T-cell (primary cell): ENCODE measurements at regions of chr14 and their contacts with region 1.

Region 1: DNA sequence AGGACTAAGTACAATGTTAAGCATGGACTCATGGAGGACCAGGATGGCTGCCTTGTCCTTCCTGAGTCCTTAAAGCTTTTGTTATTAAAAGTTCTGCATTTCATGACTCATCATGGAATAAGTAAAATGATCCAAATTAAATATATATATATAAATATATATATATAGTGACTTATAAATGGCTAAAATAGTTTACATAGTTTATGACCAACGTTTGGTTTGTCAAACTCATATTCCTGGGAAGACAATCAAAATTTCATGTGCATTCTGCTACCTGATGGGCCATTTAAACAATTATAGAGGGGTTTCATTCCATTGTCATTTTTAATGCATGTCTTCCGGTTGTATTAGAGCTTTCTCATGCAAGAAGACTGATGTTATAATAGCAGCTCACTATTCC is 1190.7 kb downstream of the FSCB start:
- DNase-seq: no peak
- ATAC-seq: no peak
- H3K4me3 ChIP-seq: no peak overlapping the region
- H3K4me3 Mint-ChIP-seq: no peak overlapping the region
- H3K27ac ChIP-seq: no peak overlapping the region
- H3K27ac Mint-ChIP-seq: no peak overlapping the region
- H3K4me1 ChIP-seq: no peaks in the 10 kb centered on the region
- H3K4me1 Mint-ChIP-seq: no peaks in the 10 kb centered on the region
- H3K27me3 ChIP-seq: no peaks in the 10 kb centered on the region
- H3K27me3 Mint-ChIP-seq: no peaks in the 10 kb centered on the region

Region 2: GRCh38 chr14:43341921-43342320 is 25.5 kb after region 1 on chr14:
- CTCF ChIA-PET with region 1: interaction called in 1 of 2 experiments, 12 read pairs
- POLR2A ChIA-PET with region 1: no interaction called
- DNase-seq: no peak
- ATAC-seq: no peak
- H3K4me3 ChIP-seq: no peak overlapping the region
- H3K4me3 Mint-ChIP-seq: no peak overlapping the region
- H3K27ac ChIP-seq: no peak overlapping the region
- H3K27ac Mint-ChIP-seq: no peak overlapping the region
- H3K4me1 ChIP-seq: no peaks in the 10 kb centered on the region
- H3K4me1 Mint-ChIP-seq: no peaks in the 10 kb centered on the region
- H3K27me3 ChIP-seq: no peaks in the 10 kb centered on the region
- H3K27me3 Mint-ChIP-seq: no peaks in the 10 kb centered on the region